A673 (cell line): ENCODE measurements at regions of chr18 and their contacts with region 1.

Region 1: DNA sequence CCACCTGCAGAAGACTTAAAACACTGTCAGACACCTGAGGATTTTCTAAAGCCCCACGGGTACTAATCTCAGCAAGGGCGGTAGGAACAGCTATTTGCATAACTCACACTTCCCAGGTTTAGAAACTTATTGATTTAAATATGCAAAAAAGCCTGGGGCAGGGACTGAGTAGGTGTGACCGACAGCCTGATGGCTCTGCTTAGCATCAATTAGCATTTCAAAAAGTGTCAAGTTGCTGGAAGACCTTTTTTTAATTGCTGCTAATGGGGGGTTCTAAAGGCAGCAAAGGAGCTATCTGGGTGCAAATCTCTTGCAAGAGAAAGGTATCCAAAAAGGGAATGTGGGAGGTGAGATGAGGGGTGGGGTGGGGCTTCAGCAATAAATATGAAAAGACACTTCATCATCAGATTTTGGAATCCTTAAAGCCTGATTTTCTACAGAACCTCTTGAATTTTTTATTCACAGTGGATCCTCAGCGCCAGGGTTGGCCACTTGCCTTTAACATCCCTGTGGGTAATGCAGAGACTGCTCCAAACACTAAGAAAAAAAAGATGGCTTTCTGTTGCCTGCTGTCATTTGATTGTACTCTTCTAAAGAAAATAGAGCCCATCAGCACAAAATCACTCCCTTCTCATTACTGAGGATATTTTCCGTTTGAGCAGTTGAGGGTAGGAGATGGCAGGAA is 121.1 kb upstream of the RMP24 start:
- DNase-seq: no peak
- H3K4me3 ChIP-seq: no peak overlapping the region
- H3K27ac ChIP-seq: no peak overlapping the region
- H3K4me1 ChIP-seq: no peaks in the 10 kb centered on the region
- H3K27me3 ChIP-seq: peaks cover 6% of the 10 kb centered on the region
- CTCF ChIP-seq: no peak

Region 2: DNA sequence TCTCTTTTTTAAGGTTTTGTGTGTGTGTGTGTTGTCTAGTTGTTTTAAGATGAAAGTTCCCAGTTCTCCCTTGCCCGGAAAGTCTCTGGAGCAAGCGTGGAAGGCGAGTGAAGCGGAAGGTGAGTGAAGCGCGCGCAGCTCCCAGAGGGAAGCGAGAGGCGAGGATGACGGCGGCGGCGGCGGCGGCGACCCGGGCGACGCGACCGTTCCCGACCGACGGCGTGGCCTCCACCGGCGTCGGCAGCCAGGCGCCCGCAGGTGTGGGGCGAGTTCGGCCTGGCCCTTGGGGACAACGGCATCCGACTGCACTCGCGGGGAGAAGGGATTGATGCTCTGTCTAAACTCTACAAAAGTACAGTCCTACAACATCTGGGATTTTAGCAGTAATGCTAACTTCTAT is 1392.3 kb after region 1 on chr18:
- CTCF ChIA-PET with region 1: interaction called, 12 read pairs
- POLR2A ChIA-PET with region 1: no interaction called
- intact Hi-C with region 1: no loop called
- DNase-seq: no peak
- H3K4me3 ChIP-seq: no peak overlapping the region
- H3K27ac ChIP-seq: no peak overlapping the region
- H3K4me1 ChIP-seq: no peaks in the 10 kb centered on the region
- H3K27me3 ChIP-seq: no peaks in the 10 kb centered on the region
- CTCF ChIP-seq: no peak